ENCODE measurements at regions of chr18 and their contacts with region 1.

Region 1: DNA sequence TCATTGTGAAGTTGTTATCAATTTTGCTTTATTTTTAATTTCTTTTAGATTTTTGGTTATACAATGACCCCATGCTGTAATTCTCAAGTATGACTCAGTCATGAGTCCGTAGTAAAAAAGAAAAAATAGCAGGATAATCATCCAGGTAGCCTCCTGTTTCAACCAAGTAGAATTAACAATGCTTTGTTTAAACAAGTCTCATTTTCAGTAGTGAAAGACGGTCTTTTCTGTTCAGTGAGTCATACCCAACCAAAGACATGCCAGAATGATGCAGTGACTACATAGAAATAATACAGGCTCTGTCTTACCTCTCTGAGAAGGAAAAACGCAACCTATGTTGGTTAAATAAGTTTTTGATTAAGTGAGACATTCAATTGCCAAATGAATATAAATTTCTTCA is 67.8 kb upstream of the DSC1 start:
- DNase-seq: peak; percentile 29
- H3K4me3 Mint-ChIP-seq: peak overlapping the region; percentile 14
- H3K27ac Mint-ChIP-seq: peak overlapping the region; percentile 96
- H3K4me1 Mint-ChIP-seq: peaks cover 85% of the 10 kb centered on the region
- H3K27me3 Mint-ChIP-seq: no peaks in the 10 kb centered on the region
- CTCF ChIP-seq: no peak

Region 2: DNA sequence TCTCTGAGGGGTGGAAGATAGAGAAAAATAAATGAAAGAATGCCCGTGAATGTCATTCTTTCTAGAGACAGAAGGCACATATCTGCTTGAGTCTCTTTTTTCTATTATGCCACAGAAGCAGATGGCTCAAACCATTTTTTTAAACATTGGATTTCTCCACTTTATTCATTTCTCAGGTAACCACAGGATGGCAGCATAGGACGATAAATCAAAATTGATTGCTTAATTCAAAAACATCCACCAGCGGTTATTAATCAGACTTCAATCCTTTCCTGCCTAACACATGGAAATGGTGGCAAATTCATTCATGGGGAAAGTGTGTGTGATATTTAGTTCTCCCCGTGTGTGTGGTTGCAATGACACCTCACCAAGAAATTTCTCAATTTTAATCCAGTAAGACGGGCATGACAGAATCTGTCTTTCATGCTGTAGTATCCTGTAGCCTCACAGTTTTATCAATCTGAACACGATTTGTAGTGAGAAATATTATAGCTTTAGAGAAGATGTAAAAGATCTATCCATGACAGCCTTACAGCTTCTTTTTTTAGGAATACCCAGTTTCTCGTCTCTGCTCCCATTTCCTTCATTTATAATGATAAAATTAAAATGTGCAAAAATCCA is 260.2 kb before region 1 on chr18:
- CTCF ChIA-PET with region 1: no interaction called
- intact Hi-C with region 1: no loop called
- DNase-seq: peak; percentile 35
- H3K4me3 Mint-ChIP-seq: no peak overlapping the region
- H3K27ac Mint-ChIP-seq: no peak overlapping the region
- H3K4me1 Mint-ChIP-seq: no peaks in the 10 kb centered on the region
- H3K27me3 Mint-ChIP-seq: no peaks in the 10 kb centered on the region
- CTCF ChIP-seq: peak; percentile 59

Region 3: GRCh38 chr18:31197676-31198075 is 32.8 kb before region 1 on chr18:
- CTCF ChIA-PET with region 1: no interaction called
- intact Hi-C with region 1: loop called (anchors 5 kb)
- DNase-seq: peak; percentile 19
- H3K4me3 Mint-ChIP-seq: no peak overlapping the region
- H3K27ac Mint-ChIP-seq: peak overlapping the region; percentile 30
- H3K4me1 Mint-ChIP-seq: peaks cover 31% of the 10 kb centered on the region
- H3K27me3 Mint-ChIP-seq: no peaks in the 10 kb centered on the region
- CTCF ChIP-seq: no peak

Region 4: DNA sequence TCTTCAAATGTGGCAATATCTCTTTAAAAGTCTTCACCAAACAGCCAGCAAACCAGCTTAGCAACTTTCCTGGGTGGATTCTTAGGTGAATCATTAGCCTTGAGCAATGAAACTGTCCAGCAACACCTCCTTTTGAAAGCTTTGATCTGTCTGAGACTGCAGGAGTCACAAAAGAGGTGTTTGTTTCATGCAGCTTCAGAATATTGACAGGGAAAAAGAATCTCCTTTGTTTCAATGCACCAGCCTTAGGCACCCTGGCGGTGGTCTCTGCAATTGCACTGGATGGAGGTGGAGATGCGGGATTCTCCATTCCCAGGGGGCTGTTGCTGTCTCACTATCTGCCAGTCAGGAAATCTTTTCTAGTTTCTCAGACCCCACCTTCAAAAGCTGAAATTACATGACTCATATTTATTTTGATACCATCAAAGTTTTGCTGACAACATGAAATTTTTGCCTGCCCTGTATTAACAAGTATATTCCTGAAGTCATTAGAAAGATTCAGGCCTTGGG is 11.5 kb after region 1 on chr18:
- CTCF ChIA-PET with region 1: interaction called, 5 read pairs
- intact Hi-C with region 1: loop called (anchors 1 kb)
- DNase-seq: peak; percentile 86
- H3K4me3 Mint-ChIP-seq: peak overlapping the region; percentile 30
- H3K27ac Mint-ChIP-seq: peak overlapping the region; percentile 92
- H3K4me1 Mint-ChIP-seq: peaks cover 65% of the 10 kb centered on the region
- H3K27me3 Mint-ChIP-seq: no peaks in the 10 kb centered on the region
- CTCF ChIP-seq: peak; percentile 92

Measured in Calu3 (cell line).